Heart right ventricle (tissue), 16 donors: ENCODE measurements at regions of chr1 and their contacts with region 1.

Region 1: GRCh38 chr1:45018599-45019230 is 6.7 kb downstream of the UROD start:
- DNase-seq: no peak
- ATAC-seq: peak in 7 of 8 donors; percentile 51 to 73 (median 63)
- H3K4me3 ChIP-seq: no peak overlapping the region
- H3K27ac ChIP-seq: no peak overlapping the region
- H3K4me1 ChIP-seq: peaks cover 0 to 13% (median 7%) of the 10 kb centered on the region in 9 donors
- H3K27me3 ChIP-seq: no peaks in the 10 kb centered on the region
- CTCF ChIP-seq: peak; percentile 17 to 77 (median 59)

Region 2: GRCh38 chr1:45297604-45298356 is 279.1 kb after region 1 on chr1:
- intact Hi-C with region 1: loop called in 9 of 10 experiments (anchors 1 to 2 kb)
- DNase-seq: no peak
- ATAC-seq: no peak
- H3K4me3 ChIP-seq: no peak overlapping the region
- H3K27ac ChIP-seq: no peak overlapping the region
- H3K4me1 ChIP-seq: peaks cover 0 to 4% (median 1%) of the 10 kb centered on the region in 9 donors
- H3K27me3 ChIP-seq: no peaks in the 10 kb centered on the region
- CTCF ChIP-seq: no peak